Activated CD4-positive, alpha-beta memory T cell treated with anti-CD3 and anti-CD28 coated beads for 36 hours (primary cell): ENCODE measurements at regions of chr13 and their contacts with region 1.

Region 1: DNA sequence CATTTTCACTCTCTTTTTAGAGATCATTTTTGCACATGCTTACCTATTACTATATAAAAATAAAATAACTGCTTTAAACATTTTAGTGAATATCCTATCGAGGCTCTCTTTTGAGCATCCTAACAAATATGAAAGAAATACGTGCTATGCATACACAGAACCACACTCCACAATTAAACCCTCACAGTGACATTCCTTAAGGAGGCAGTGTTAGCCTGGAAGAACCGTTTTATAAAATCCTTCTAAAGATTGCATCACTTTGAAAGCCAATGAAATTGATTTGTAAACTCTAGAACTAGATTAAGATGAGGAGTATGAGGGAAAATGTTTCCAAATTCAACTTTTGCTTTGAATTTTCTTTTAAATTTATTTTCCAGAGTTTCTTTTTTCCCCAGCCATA is 11.1 kb upstream of the ENOX1 start:
- DNase-seq: no peak
- H3K4me3 Mint-ChIP-seq: no peak overlapping the region
- H3K27ac Mint-ChIP-seq: no peak overlapping the region
- H3K4me1 Mint-ChIP-seq: peaks cover 33% of the 10 kb centered on the region
- H3K27me3 Mint-ChIP-seq: peaks cover 30% of the 10 kb centered on the region

Region 2: DNA sequence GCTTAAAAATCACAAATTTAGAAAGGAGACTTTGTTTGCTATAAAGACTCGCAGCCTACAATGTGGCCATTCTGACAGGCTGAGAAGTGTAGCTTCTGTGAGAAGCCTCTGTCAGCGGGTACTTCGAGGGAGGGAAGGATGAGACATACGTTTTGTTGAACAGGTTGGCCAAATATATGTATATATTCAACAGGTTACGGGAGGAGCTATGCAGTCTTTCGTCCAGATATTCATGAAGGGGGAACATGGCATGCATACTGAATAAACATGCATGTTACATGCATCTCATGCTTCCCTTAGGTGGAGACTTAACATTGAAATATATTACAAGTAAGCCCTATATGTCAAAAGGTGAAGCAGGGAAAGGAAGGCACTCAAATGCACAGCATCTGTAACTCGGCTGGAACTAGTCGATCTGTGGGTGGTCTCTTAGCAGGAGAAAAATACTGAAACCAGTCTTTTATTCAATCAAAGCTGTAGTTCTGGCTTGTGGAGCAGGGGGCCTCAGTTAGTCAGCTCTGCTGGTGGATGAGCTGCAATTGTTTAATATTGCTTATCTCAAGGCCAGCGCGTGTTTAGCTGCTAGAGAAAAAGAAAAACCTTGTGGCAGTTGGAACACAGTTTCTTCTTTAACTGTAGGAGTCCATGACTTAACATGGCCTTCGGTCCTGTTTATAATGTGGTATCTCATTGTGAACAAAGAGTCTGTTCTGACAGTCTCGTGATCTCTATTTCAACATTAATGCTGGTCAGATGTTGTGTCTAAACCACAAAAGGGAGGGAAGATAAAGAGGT is 922.2 kb before region 1 on chr13:
- CTCF ChIA-PET with region 1: no interaction called
- POLR2A ChIA-PET with region 1: no interaction called
- intact Hi-C with region 1: loop called (anchors 2 kb)
- DNase-seq: peak; percentile 9
- H3K4me3 Mint-ChIP-seq: no peak overlapping the region
- H3K27ac Mint-ChIP-seq: no peak overlapping the region
- H3K4me1 Mint-ChIP-seq: peaks cover 19% of the 10 kb centered on the region
- H3K27me3 Mint-ChIP-seq: peaks cover 5% of the 10 kb centered on the region

Region 3: DNA sequence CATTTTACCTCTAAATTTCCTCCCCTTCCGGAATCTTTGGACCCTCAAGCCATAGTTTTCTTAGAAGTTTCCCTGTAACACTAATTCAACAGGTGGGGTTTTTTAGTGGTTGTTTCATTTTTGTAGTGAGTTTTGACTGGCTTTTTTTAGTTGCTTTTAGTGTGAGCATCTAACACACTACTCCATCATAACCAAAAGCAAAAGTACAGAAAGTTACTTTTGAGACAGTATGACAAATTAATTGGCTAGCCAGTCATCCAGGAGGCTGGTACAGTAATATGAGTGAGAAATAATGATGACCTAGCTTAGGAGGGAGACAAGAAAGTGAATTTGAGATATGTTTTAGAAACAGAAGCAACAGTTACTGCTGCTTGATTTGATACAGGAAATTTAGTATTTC is 703.0 kb before region 1 on chr13:
- CTCF ChIA-PET with region 1: no interaction called
- POLR2A ChIA-PET with region 1: interaction called, 3 read pairs
- intact Hi-C with region 1: loop called (anchors 2 kb)
- DNase-seq: no peak
- H3K4me3 Mint-ChIP-seq: no peak overlapping the region
- H3K27ac Mint-ChIP-seq: peak overlapping the region; percentile 40
- H3K4me1 Mint-ChIP-seq: peaks cover 22% of the 10 kb centered on the region
- H3K27me3 Mint-ChIP-seq: no peaks in the 10 kb centered on the region

Region 4: DNA sequence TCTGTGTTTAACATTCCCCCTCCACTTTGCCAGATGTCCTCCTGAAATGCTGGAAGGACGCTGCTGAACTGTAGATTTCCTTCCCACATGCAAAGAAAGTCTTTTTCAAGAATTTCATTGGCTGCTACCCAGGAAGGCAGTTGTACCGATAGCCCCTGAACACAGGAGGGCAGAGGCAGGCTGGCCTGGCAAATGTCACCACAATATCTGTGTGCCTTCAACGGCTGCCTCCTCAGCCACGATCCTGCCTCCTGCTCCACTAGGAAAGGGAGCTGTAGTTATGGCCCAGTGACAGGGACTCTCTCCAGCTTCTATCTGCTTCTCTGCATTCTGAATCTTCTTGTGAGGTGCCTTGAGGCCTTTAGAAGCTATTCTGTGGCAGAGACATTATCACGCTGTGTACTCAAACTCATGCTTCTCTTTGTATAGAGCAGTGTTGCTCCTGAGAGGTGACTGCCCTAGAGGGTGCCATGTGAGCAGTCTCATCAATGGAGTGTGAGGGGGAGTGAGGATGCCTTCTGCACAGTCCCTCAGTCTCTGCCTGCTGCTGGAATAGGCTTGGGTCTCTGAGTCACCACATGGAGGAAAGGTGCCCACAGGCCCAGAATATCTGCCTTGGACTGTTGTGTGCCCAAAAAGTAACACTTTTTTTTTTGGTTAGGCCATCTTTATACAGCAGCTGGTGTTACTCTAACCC is 494.7 kb before region 1 on chr13:
- CTCF ChIA-PET with region 1: no interaction called
- POLR2A ChIA-PET with region 1: no interaction called
- intact Hi-C with region 1: loop called (anchors 5 kb)
- DNase-seq: no peak
- H3K4me3 Mint-ChIP-seq: no peak overlapping the region
- H3K27ac Mint-ChIP-seq: no peak overlapping the region
- H3K4me1 Mint-ChIP-seq: no peaks in the 10 kb centered on the region
- H3K27me3 Mint-ChIP-seq: peaks cover 14% of the 10 kb centered on the region

Region 5: GRCh38 chr13:43316946-43317353 is 480.9 kb before region 1 on chr13:
- CTCF ChIA-PET with region 1: no interaction called
- POLR2A ChIA-PET with region 1: no interaction called
- intact Hi-C with region 1: no loop called
- DNase-seq: no peak
- H3K4me3 Mint-ChIP-seq: no peak overlapping the region
- H3K27ac Mint-ChIP-seq: no peak overlapping the region
- H3K4me1 Mint-ChIP-seq: no peaks in the 10 kb centered on the region
- H3K27me3 Mint-ChIP-seq: peaks cover 11% of the 10 kb centered on the region

Region 6: GRCh38 chr13:43838594-43839308 is 40.9 kb after region 1 on chr13:
- CTCF ChIA-PET with region 1: no interaction called
- POLR2A ChIA-PET with region 1: no interaction called
- intact Hi-C with region 1: no loop called
- DNase-seq: no peak
- H3K4me3 Mint-ChIP-seq: no peak overlapping the region
- H3K27ac Mint-ChIP-seq: no peak overlapping the region
- H3K4me1 Mint-ChIP-seq: no peaks in the 10 kb centered on the region
- H3K27me3 Mint-ChIP-seq: no peaks in the 10 kb centered on the region